Posterior cingulate gyrus (tissue), 11 donors: ENCODE measurements at regions of chr10 and their contacts with region 1.

Region 1: GRCh38 chr10:72273410-72274212 is at the start of gene DDIT4:
- DNase-seq: peak; percentile 100

Region 2: DNA sequence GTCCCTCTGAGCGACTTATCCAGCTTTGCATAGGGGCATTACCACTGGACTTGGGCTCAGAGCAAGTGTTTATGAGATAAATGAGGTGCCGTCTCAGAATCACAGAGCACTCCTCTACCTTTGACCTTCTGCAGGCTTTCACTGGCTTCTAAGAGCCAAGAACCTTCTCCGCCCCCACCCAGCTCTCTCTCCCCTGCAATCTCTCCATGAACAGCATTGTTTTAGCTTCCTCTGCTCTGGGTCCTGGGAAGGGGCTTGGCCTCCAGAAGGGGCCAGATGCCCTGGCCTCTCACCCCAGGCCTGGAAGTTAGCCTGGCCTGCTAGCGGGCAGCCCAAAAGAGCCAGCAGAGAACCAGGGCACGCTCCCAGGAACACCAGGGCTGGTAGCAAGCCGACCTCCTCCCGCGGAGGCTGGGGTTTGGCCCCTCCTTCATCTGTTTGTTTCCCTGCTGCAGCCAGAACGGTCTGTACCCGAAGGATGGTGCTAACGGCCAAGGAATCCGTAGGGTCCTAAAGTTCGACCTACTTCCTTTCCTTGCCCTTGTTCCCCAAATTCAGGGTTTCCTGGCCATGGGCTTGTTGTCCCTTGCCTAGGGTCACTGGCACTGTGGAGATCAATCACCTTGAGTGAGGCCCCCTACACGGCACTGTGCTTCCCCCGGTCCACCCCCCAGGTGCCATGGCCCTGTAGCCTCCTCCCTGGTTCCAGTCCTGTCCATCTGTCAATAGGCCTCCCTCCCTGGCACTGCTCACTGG is 18.6 kb before region 1 on chr10:
- intact Hi-C with region 1: loop called (anchors 1 kb)
- DNase-seq: peak; percentile 87 to 99 (median 93)

Region 3: DNA sequence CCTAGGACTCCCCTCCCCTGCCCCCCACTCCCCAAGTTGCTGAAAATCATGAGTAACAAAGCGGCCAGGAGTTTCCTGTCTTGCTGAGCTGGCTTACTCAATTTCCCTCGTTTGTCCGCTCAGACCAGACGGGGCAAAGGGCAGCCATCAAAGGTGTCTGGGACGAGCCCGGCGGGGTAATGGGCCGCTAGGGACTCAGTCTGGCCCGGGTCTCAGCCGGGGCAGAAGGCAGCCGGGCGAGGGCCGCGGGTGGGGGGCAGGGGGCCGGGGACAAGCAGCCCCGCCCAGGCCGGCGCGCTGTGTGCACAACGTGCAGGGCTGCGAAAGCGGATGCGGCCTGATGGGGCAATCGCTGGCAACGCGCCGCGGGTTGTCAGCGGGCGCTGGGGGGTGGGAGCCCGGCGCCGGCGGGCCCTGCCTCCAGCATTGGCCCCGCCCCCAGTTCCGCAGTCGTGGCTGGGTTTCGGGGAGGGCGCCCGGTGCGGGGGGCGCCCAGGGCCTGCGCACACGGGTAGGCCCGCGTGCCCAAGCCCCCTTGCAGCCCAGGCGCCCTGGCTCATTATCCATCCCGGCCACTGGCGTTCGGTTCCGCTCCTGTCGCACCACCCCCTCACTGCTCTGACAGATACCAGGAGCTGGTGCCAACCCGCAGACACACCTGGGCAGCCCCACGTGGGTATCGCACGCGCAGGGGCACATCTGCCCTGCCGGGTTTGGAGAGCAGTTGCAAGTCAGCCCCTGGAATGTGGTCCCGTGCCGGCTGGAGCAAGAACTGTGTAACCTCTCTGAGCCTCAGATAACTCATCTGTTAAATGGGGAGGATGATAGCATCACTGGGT is 46.0 kb after region 1 on chr10:
- intact Hi-C with region 1: loop called (anchors 5 kb)
- DNase-seq: peak; percentile 62 to 97 (median 82)

Region 4: DNA sequence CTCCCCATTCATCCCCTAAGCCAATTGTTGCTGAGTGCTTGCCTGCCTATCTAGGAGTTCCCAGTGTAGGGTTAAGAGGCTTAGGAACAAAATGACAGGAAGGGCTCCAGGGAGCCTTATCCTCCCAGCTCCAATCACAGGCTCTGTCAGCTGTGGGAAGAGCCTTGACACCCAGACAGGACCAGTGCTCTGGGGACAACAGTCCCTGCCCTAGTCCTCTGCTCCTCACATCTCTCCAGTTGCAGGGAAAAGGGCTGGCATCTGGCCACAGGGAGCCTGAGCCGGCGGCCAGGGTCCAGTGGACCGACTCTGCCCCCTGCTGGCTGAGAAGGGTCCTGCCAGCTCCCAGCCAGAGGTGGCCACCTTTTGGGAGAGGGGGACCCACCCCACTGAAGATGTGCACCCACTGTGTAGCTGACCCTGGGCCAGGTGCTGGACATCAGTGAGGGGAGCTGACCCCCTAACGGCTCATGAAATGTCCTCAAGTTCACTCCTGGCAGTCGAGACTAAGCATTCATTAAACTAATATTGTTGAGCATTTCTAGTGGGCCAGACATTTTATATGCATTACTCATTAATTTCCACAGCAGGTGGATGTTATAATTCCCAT is 63.5 kb after region 1 on chr10:
- intact Hi-C with region 1: loop called (anchors 2 kb)
- DNase-seq: peak in 9 of 10 donors; percentile 71 to 97 (median 84)

Region 5: GRCh38 chr10:72466018-72466417 is 192.4 kb after region 1 on chr10:
- intact Hi-C with region 1: no loop called
- DNase-seq: no peak